ENCODE measurements at regions of chr9 and their contacts with region 1.

Region 1: DNA sequence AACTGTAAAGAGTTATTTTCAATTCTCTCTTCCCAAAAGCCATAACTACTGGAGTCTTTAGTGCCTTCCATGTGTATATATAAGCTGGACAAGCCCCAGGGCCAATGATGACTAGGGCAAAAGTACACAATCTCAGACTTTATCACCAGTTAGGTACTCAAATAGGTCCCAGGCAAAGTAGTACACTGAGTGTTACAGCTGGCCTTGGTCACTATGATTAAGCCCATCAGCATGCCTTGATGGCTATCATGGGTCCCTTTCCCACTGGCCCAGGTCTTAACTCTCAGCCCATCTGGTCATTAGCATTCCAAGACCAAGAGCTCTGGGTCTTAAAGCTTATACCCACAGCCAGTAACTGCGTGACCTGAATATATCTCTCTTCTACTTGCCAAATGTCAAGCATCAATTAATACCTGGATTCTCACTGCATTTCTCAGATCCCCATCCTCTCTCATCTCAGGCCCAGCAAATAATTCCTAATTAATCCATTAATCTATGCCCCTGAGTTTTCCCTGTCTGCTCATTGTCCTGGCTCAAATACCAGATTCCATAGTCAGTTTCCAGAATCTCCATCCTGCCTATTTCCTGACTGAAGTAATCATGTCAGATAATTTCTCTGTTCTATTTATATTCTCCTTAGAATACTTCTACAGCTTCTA is 62.3 kb downstream of the NR6A1 start:
- DNase-seq: no peak
- H3K4me3 ChIP-seq: no peak overlapping the region
- H3K27ac ChIP-seq: no peak overlapping the region
- H3K4me1 ChIP-seq: peaks cover 0 to 6% (median 0%) of the 10 kb centered on the region in 4 experiments
- H3K27me3 ChIP-seq: no peaks in the 10 kb centered on the region

Region 2: DNA sequence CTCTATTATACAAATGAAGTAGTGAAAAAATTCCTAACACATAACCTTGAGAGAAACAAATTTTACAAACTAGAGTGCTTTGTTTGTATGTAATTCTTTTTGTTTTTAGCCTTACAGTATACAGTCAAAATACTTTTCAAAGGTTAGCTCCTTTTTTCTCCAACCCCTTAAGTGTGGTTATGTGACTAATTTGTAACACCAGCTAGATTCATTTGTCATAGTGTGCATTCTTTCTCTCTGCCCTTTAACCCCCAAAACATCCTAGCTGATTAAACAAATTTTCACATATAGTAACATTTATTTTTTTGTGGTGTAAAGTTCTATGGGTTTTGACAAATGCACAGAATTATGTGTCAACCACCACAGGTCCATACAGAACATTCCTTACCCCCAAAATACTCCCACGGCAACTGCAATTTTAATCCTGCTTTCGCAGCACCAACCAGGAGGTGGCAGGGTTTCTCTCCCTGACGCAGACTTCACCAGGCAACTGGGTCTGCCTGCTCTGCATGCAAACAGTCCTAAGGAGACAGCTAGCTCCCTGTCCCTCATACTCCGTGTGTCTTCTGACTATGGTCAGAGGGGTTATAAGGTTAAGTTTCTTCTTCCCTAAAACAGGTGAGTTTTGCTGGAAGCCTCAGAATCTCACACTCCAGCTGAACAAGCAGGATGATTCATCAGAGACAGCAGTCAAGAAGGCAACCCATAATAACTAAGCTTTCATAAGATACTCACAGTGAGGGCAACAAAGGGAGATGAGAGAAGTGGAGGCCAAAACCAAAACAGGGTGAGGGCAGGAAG is 157.1 kb before region 1 on chr9:
- CTCF ChIA-PET with region 1: interaction called, 54 read pairs
- POLR2A ChIA-PET with region 1: no interaction called
- DNase-seq: peak; percentile 52 to 71 (median 69)
- H3K4me3 ChIP-seq: no peak overlapping the region
- H3K27ac ChIP-seq: no peak overlapping the region
- H3K4me1 ChIP-seq: peaks cover 11 to 42% (median 28%) of the 10 kb centered on the region in 4 experiments
- H3K27me3 ChIP-seq: no peaks in the 10 kb centered on the region

Region 3: GRCh38 chr9:124574534-124575341 is 134.0 kb before region 1 on chr9:
- CTCF ChIA-PET with region 1: no interaction called
- POLR2A ChIA-PET with region 1: no interaction called
- DNase-seq: no peak
- H3K4me3 ChIP-seq: no peak overlapping the region
- H3K27ac ChIP-seq: no peak overlapping the region
- H3K4me1 ChIP-seq: peaks cover 0 to under 1% (median under 1%) of the 10 kb centered on the region in 4 experiments
- H3K27me3 ChIP-seq: no peaks in the 10 kb centered on the region

Region 4: DNA sequence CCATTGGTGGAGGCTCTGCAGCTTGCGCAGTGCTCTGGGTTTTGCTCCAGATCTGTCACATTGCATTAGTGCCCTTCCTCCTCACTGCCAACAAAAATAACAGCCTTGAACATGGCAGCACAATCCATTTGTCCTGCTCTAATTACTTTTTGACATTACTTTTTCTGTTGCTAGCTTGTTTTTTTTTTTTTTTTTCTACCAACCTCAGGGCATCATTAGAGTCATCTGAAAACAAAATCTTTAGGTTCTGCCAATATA is 84.1 kb before region 1 on chr9:
- CTCF ChIA-PET with region 1: interaction called, 155 read pairs
- POLR2A ChIA-PET with region 1: no interaction called
- DNase-seq: no peak
- H3K4me3 ChIP-seq: no peak overlapping the region
- H3K27ac ChIP-seq: no peak overlapping the region
- H3K4me1 ChIP-seq: peaks cover 0 to 16% (median 10%) of the 10 kb centered on the region in 4 experiments
- H3K27me3 ChIP-seq: no peaks in the 10 kb centered on the region

Region 5: GRCh38 chr9:124658165-124659017 is 50.4 kb before region 1 on chr9:
- CTCF ChIA-PET with region 1: interaction called, 11 read pairs
- POLR2A ChIA-PET with region 1: no interaction called
- DNase-seq: peak; percentile 92 to 97 (median 95)
- H3K4me3 ChIP-seq: peak overlapping the region in 6 of 7 experiments; percentile 78 to 95 (median 90)
- H3K27ac ChIP-seq: peak overlapping the region; percentile 89 to 95
- H3K4me1 ChIP-seq: peaks cover 12 to 56% (median 35%) of the 10 kb centered on the region in 4 experiments
- H3K27me3 ChIP-seq: no peaks in the 10 kb centered on the region

Region 6: GRCh38 chr9:124771021-124771866 is 62.5 kb after region 1 on chr9 and contains the start of gene NR6A1:
- CTCF ChIA-PET with region 1: interaction called, 96 read pairs
- POLR2A ChIA-PET with region 1: no interaction called
- DNase-seq: peak; percentile 96 to 98 (median 98)
- H3K4me3 ChIP-seq: peak within 1 kb of the TSS; percentile 85 to 98 (median 92)
- H3K27ac ChIP-seq: peak within 1 kb of the TSS; percentile 94 to 97
- H3K4me1 ChIP-seq: peaks cover 13 to 57% (median 34%) of the 10 kb centered on the region in 4 experiments
- H3K27me3 ChIP-seq: peaks cover 0 to 5% (median 0%) of the 10 kb centered on the region in 5 experiments

Region 7: GRCh38 chr9:124820698-124821623 is 112.2 kb after region 1 on chr9:
- CTCF ChIA-PET with region 1: no interaction called
- POLR2A ChIA-PET with region 1: no interaction called
- DNase-seq: no peak
- H3K4me3 ChIP-seq: no peak overlapping the region
- H3K27ac ChIP-seq: no peak overlapping the region
- H3K4me1 ChIP-seq: peaks cover 0 to 6% (median 2%) of the 10 kb centered on the region in 4 experiments
- H3K27me3 ChIP-seq: no peaks in the 10 kb centered on the region